ENCODE measurements at regions of chr15 and their contacts with region 1.

Region 1: GRCh38 chr15:71443538-71443937 is 328.3 kb downstream of the THSD4 start:
- DNase-seq: peak; percentile 55
- H3K4me3 ChIP-seq: no peak overlapping the region
- H3K27ac ChIP-seq: no peak overlapping the region
- H3K4me1 ChIP-seq: peaks cover 20% of the 10 kb centered on the region
- H3K27me3 ChIP-seq: no peaks in the 10 kb centered on the region
- CTCF ChIP-seq: peak; percentile 78 to 80
- POLR2A ChIP-seq: no peak

Region 2: DNA sequence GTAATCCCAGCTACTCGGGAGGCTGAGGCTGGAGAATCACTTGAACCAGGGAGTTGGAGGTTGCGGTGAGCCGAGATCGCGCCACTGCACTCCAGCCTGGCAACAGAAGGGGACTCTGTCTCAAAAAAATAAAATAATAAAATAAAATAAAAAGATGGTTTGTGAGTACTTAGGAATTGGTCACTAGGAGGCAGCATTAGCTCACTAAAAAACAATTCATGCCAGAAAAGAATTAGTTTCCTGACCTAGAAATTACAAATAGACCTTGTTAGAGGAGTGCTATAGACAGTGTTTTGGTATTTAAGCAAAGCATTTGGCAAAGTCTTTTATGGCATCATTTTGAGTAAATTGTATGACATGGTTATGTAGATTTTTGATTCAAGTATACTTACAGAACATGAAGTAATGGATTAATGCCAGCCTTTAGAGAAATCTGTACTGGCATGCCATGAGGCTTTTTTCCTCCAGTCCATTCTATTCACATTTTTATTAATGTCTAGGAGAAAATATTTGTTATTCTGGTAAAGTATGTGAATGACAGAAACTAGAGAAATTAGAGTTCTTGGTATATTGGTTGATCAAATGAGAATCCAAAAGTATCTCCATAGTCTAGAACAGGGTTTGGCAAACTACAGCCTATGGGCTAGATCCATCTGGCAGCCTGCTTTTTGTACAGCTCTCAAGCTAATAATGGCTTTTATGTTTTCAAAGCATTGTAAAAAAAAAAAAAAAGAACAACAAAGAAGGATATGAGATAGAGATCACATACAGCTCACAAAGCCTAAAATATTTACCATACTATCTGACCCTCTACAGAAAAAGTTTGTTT is 469.3 kb before region 1 on chr15:
- CTCF ChIA-PET with region 1: interaction called, 46 read pairs
- POLR2A ChIA-PET with region 1: no interaction called
- dilution Hi-C with region 1: no loop called
- intact Hi-C with region 1: loop called (anchors 1 kb)
- DNase-seq: peak; percentile 66
- H3K4me3 ChIP-seq: no peak overlapping the region
- H3K27ac ChIP-seq: no peak overlapping the region
- H3K4me1 ChIP-seq: no peaks in the 10 kb centered on the region
- H3K27me3 ChIP-seq: no peaks in the 10 kb centered on the region
- CTCF ChIP-seq: peak in 1 of 2 donors; percentile 38
- POLR2A ChIP-seq: no peak

Region 3: GRCh38 chr15:71103102-71103676 is 340.3 kb before region 1 on chr15:
- CTCF ChIA-PET with region 1: interaction called, 54 read pairs
- POLR2A ChIA-PET with region 1: no interaction called
- dilution Hi-C with region 1: no loop called
- intact Hi-C with region 1: no loop called
- DNase-seq: peak; percentile 38
- H3K4me3 ChIP-seq: no peak overlapping the region
- H3K27ac ChIP-seq: no peak overlapping the region
- H3K4me1 ChIP-seq: no peaks in the 10 kb centered on the region
- H3K27me3 ChIP-seq: no peaks in the 10 kb centered on the region
- CTCF ChIP-seq: peak; percentile 48 to 78
- POLR2A ChIP-seq: no peak

Region 4: DNA sequence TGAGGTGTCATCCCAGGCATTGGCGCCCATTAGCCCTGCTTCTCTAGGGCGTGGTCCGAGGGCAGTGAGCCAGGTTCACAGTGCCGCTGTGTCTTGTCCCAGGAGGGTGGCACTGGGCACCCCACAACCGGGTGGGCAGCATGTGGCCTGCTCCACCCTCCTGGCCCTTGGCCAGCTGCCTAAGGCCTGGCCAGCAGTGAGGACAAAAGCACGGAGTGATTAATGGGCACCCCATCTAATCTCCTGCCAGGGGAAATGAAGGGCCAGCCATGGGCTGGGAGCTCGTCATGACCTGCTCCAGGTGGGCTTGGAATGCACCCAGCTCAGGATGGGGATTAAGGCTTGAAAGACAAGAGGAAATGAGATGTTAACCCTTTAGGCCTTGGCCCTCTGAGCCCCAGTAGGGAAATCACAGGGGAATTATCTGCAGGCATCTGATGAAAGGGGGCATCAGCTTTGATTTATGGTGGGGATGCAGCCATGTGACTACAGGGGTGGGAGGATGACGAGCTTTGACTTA is 323.1 kb before region 1 on chr15:
- CTCF ChIA-PET with region 1: interaction called, 102 read pairs
- POLR2A ChIA-PET with region 1: no interaction called
- dilution Hi-C with region 1: no loop called
- intact Hi-C with region 1: loop called (anchors 1 kb)
- DNase-seq: no peak
- H3K4me3 ChIP-seq: no peak overlapping the region
- H3K27ac ChIP-seq: no peak overlapping the region
- H3K4me1 ChIP-seq: peaks cover 7% of the 10 kb centered on the region
- H3K27me3 ChIP-seq: no peaks in the 10 kb centered on the region
- CTCF ChIP-seq: no peak
- POLR2A ChIP-seq: no peak

Region 5: GRCh38 chr15:71431345-71432336 is 11.9 kb before region 1 on chr15:
- CTCF ChIA-PET with region 1: interaction called, 11 read pairs
- POLR2A ChIA-PET with region 1: no interaction called
- dilution Hi-C with region 1: no loop called
- intact Hi-C with region 1: no loop called
- DNase-seq: no peak
- H3K4me3 ChIP-seq: no peak overlapping the region
- H3K27ac ChIP-seq: no peak overlapping the region
- H3K4me1 ChIP-seq: no peaks in the 10 kb centered on the region
- H3K27me3 ChIP-seq: no peaks in the 10 kb centered on the region
- CTCF ChIP-seq: no peak
- POLR2A ChIP-seq: no peak

Region 6: DNA sequence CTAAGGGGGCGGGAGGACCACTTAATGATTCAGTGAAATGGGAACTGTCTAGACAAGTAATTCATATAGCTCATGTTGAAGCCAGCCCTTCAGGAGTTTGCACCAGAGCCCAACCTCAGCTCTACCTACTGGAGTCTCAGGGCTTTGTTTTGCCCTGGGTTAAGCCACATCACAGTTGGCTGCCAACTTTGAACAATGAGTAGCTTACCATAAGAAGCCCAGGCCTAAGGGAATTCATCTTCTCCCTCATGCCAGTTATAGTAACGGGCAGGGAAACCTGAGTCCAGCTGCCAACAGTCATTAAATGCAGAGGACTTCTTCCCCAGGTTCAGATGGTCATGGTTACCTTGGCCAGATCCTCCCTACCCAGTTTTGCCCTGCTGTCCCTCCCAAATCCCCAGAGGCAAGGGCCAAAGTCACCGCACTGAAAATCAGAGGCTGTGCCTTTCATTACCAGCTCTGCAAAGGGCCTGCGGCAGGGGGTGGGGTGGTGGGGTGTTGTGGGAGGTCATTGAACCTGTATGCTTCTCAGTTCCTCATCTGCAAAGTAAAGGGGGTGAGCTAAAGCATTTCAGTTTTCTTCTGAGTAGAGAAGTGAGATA is 64.6 kb after region 1 on chr15:
- CTCF ChIA-PET with region 1: no interaction called
- POLR2A ChIA-PET with region 1: no interaction called
- dilution Hi-C with region 1: no loop called
- intact Hi-C with region 1: no loop called
- DNase-seq: no peak
- H3K4me3 ChIP-seq: no peak overlapping the region
- H3K27ac ChIP-seq: no peak overlapping the region
- H3K4me1 ChIP-seq: no peaks in the 10 kb centered on the region
- H3K27me3 ChIP-seq: peaks cover 0 to 2% of the 10 kb centered on the region in 2 experiments
- CTCF ChIP-seq: no peak
- POLR2A ChIP-seq: no peak

Measured in endothelial cell of umbilical vein (primary cell).